IMR-90 (cell line): ENCODE measurements at regions of chr2 and their contacts with region 1.

Region 1: GRCh38 chr2:195612611-195613495 is 44.2 kb upstream of the SLC39A10 start:
- DNase-seq: peak; percentile 82
- ATAC-seq: peak; percentile 90
- H3K4me3 ChIP-seq: peak overlapping the region; percentile 49; the same call in 1 of the 2 replicates
- H3K27ac ChIP-seq: peak overlapping the region; percentile 89
- H3K4me1 ChIP-seq: peaks cover 11% of the 10 kb centered on the region
- H3K27me3 ChIP-seq: no peaks in the 10 kb centered on the region
- CTCF ChIP-seq: no peak
- POLR2A ChIP-seq: peak; percentile 67; the same call in 1 of the 2 replicates
- RAD21 ChIP-seq: peak; percentile 10; the same call in 1 of the 2 replicates

Region 2: DNA sequence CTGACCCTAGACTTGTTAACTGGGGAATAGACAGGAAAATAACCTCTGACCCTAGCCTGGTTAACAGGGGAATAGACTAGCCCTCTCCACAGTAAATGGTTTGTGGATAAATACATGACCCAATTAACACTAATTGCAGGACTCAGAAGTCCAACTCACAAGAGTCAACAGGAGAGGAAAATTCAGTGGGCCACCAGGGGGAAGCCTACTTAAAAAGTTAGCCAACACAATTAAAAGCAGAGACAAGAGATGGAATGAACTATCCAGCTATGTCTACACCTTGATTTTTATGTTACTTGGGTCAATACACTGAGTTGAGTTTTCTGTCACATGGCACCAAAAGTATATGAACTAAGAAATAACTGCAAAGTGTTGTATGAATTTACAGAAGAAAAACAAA is 114.7 kb before region 1 on chr2:
- CTCF ChIA-PET with region 1: no interaction called
- POLR2A ChIA-PET with region 1: no interaction called
- dilution Hi-C with region 1: no loop called
- in situ Hi-C with region 1: no loop called
- intact Hi-C with region 1: loop called (anchors 5 kb)
- DNase-seq: peak; percentile 30
- ATAC-seq: no peak
- H3K4me3 ChIP-seq: no peak overlapping the region
- H3K27ac ChIP-seq: no peak overlapping the region
- H3K4me1 ChIP-seq: 0 out of 2 replicates have a peak, but pooled peaks cover 2% of the 10 kb centered on the region
- H3K27me3 ChIP-seq: no peaks in the 10 kb centered on the region
- CTCF ChIP-seq: 0 out of 2 replicates have a peak, but pooled peaks have one; percentile 29
- POLR2A ChIP-seq: no peak
- RAD21 ChIP-seq: peak; percentile 32; the same call in 1 of the 2 replicates

Region 3: GRCh38 chr2:195533771-195534642 is 78.8 kb before region 1 on chr2:
- CTCF ChIA-PET with region 1: no interaction called
- POLR2A ChIA-PET with region 1: no interaction called
- dilution Hi-C with region 1: no loop called
- in situ Hi-C with region 1: no loop called
- intact Hi-C with region 1: loop called (anchors 2 kb)
- DNase-seq: peak; percentile 94
- ATAC-seq: peak; percentile 84
- H3K4me3 ChIP-seq: no peak overlapping the region
- H3K27ac ChIP-seq: peak overlapping the region; percentile 65
- H3K4me1 ChIP-seq: peaks cover 11% of the 10 kb centered on the region
- H3K27me3 ChIP-seq: no peaks in the 10 kb centered on the region
- CTCF ChIP-seq: peak; percentile 37
- POLR2A ChIP-seq: no peak
- RAD21 ChIP-seq: peak; percentile 27; the same call in 1 of the 2 replicates

Region 4: DNA sequence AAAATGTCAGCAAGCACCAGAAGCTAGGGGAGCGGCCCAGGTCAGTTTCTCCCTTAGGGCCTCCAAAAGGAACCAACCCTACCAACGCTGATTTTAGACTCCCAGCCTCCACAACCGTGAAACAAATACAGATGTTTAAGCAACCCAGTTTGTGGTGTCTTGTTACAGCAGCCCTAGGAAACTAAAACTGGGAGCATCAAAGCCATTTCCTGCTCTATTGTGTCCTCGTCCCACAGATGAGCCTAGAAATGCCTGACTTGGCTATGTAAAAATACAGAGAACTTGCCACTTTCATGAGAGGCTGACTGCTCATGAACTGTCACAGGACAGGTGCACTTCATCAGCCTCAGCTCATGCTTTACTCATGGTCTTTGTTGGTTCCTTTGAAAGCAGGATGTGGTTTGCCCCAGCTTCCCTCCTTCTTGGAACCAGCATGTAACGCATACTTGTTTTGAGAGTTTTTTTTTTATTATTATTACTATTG is 53.4 kb before region 1 on chr2:
- CTCF ChIA-PET with region 1: interaction called, 3 read pairs
- POLR2A ChIA-PET with region 1: interaction called, 5 read pairs
- dilution Hi-C with region 1: no loop called
- in situ Hi-C with region 1: no loop called
- intact Hi-C with region 1: loop called (anchors 1 kb)
- DNase-seq: peak; percentile 100
- ATAC-seq: peak; percentile 53
- H3K4me3 ChIP-seq: no peak overlapping the region
- H3K27ac ChIP-seq: peak overlapping the region; percentile 89
- H3K4me1 ChIP-seq: peaks cover 20% of the 10 kb centered on the region
- H3K27me3 ChIP-seq: no peaks in the 10 kb centered on the region
- CTCF ChIP-seq: no peak
- POLR2A ChIP-seq: peak; percentile 38; the same call in 1 of the 2 replicates
- RAD21 ChIP-seq: peak; percentile 24